BJ (cell line): ENCODE measurements at regions of chr2 and their contacts with region 1.

Region 1: DNA sequence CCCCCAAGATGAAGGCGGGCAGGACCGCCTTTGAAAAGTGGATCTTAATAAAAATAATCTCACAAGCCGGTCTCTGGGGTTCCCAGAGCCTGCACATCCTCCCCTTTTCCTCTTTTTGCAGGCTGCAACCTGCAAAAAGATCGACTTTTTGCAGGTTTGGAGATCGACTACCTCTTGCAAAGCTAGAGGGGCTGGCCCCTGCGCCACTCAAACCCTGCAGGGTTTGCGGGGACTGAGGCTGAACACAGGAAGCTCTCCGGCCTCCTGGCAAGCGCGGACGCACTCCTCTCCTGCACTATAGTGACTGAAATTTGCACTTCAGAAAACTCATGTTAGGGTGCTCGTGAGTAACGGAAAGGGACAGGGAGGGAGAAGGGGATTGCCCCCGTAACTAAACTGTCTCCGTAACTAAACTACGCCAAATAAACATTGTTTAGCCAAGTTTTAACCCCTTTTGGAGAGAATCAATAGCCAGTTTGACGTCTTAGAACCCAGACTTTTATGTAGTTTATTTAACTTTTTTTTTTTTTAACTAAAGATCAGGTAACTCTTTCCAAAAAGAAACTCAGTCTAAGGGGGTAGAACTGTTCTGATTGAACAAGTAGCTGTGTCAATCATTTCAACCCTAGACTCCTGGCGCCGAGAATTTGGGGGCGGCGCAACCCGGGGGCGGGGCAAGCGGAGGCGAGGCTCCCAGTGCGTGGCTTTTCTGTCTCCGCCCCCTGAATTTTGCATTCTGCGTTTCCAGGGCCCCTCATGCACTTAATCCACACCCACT is 2.5 kb downstream of the IGFBP5 start:
- DNase-seq: no peak
- H3K4me3 ChIP-seq: peak overlapping the region; percentile 75
- H3K27me3 ChIP-seq: no peaks in the 10 kb centered on the region
- CTCF ChIP-seq: no peak

Region 2: GRCh38 chr2:216810399-216811160 is 117.8 kb after region 1 on chr2:
- CTCF ChIA-PET with region 1: interaction called, 3 read pairs
- POLR2A ChIA-PET with region 1: interaction called, 15 read pairs
- DNase-seq: no peak
- H3K4me3 ChIP-seq: no peak overlapping the region
- H3K27me3 ChIP-seq: peaks cover 2% of the 10 kb centered on the region; the same call in 1 of the 2 replicates
- CTCF ChIP-seq: no peak

Region 3: GRCh38 chr2:217090024-217090473 is 397.2 kb after region 1 on chr2:
- CTCF ChIA-PET with region 1: no interaction called
- POLR2A ChIA-PET with region 1: interaction called, 17 read pairs
- DNase-seq: no peak
- H3K4me3 ChIP-seq: no peak overlapping the region
- H3K27me3 ChIP-seq: no peaks in the 10 kb centered on the region
- CTCF ChIP-seq: no peak

Region 4: DNA sequence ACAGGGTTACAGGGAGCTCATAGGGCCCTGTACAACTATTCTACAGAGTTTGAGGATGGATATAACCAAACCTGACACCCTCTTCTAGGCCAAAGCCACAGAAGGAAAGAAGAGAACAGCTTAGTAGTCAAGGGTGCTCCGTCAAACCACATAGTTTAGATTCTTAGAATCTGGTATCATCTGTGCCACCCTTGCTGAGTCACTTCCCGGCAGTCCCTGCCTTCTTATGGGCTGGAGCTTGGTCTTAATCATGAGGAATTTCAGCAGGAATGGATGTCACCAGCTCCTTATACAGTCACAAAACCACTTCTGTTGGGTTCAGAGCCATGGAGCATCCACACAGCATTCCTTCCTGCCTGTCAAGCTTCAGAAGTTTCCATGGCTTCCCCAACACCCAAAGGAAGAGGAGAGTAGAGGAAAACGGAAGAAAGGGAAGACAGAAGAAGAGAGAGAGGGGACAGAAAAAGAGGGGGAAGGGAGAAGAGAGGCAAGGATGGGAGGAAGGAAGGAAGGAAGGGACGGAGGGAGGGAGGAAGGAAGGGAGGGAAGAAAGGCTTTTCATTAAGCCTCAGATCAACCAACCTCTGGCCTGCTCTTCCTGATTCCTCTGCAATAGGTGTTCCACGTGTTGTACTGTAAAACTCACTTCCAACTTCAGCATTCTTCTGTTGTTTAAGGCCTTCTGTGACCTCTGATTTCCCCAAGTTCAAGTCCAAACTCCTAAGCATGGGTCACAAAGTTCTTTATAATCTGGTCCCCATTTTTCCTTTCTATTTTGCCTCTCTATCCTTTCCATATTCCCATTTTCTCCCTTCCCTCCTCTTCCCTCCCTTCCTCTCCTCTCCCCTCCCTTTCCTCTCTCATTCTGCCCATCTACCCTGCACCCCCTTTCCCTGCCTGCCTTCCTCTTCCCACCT is 413.2 kb after region 1 on chr2:
- CTCF ChIA-PET with region 1: interaction called, 13 read pairs
- POLR2A ChIA-PET with region 1: interaction called, 13 read pairs
- DNase-seq: peak; percentile 91
- H3K4me3 ChIP-seq: no peak overlapping the region
- H3K27me3 ChIP-seq: no peaks in the 10 kb centered on the region
- CTCF ChIP-seq: no peak

Region 5: GRCh38 chr2:217338306-217338916 is 645.6 kb after region 1 on chr2:
- CTCF ChIA-PET with region 1: no interaction called
- POLR2A ChIA-PET with region 1: interaction called, 10 read pairs
- DNase-seq: peak; percentile 89
- H3K4me3 ChIP-seq: no peak overlapping the region
- H3K27me3 ChIP-seq: no peaks in the 10 kb centered on the region
- CTCF ChIP-seq: no peak

Region 6: DNA sequence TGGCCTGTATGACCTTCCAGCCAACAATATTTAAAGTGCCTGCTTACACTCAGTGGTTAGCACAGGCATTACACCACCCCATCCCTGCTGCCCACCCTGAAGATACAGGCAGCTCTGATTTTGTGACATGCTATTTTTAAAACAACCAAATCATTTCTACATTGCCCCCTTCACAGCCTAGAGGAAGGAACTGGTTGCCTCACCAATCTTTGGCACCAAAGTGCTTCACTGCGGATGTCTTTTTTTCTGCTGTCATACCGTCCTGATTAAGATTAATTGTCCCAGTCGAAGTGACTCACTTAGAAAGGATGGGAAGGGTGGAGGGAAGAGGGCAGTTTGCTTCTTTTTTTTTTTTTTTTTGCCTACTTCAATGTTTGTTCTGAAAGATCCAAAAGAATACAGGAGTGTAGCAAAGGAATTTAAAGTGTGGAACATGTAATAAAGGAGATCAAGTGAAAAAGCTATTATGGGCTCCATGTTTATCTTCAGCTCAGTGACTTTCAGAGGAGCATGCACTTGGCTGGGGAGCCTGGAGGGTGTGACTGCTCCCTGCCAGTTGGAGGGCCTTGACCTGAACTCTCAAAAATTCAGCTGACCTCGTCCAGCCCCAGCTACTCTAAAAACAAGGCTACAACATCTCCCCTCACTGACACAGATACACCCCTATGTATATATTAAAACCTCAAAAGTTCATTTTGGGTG is 668.1 kb after region 1 on chr2:
- CTCF ChIA-PET with region 1: interaction called, 5 read pairs
- POLR2A ChIA-PET with region 1: interaction called, 12 read pairs
- DNase-seq: peak; percentile 87
- H3K4me3 ChIP-seq: no peak overlapping the region
- H3K27me3 ChIP-seq: no peaks in the 10 kb centered on the region
- CTCF ChIP-seq: no peak

Region 7: DNA sequence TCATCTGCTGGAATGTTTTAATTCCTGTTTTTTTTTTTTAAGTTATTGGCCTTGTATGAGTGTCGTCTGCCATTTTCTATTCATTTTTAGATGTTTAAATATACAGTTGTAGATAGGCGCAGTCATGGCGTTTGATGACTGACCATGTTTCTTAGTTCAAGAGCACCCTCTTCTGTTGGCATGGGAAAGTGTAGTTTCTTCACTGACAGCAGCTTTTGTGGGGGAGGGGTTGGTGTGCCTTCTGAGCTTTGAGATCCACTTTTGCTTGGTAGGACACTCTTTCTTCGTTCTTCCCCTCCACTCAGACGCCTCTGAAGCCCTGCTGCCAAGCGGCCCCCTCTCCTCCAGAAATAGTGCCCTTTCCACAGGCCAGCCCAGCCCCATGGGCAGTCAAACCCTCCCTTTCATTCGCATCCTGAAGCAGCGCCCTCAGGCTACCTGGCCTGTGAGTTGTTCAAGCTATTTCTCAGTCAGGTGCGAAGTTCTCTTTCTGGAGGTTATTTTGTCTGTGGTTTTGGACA is 818.0 kb after region 1 on chr2:
- CTCF ChIA-PET with region 1: interaction called, 47 read pairs
- POLR2A ChIA-PET with region 1: interaction called, 10 read pairs
- DNase-seq: peak; percentile 38
- H3K4me3 ChIP-seq: no peak overlapping the region
- H3K27me3 ChIP-seq: no peaks in the 10 kb centered on the region
- CTCF ChIP-seq: peak; percentile 80